ENCODE measurements at regions of chr10 and their contacts with region 1.

Region 1: DNA sequence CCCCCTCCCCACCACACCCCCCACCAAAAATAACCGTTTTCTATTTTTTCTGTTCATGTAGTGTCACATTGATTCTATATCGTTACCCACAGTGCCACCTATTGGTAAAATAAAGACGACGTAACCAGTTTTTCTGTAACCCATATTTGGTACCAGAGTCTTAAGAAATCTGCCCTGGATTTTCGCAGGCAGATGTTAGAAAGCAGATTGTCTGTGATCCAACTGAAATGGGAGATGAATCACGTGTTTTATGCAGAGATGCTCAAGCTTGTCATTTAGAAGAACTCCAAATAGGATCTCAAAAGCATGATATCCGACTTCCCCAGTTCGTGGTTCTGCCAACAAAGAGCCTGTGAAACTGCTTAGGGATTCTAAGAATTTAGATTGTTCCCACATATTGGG is 261.1 kb upstream of the CSTF2T start:
- DNase-seq: no peak
- ATAC-seq: peak; percentile 71
- H3K4me3 ChIP-seq: no peak overlapping the region
- H3K27ac ChIP-seq: no peak overlapping the region
- H3K4me1 ChIP-seq: no peaks in the 10 kb centered on the region
- H3K27me3 ChIP-seq: no peaks in the 10 kb centered on the region
- CTCF ChIP-seq: peak; percentile 38 to 50 (median 49); a peak in 5 of 6 replicates
- EP300 ChIP-seq: no peak
- POLR2A ChIP-seq: no peak
- RAD21 ChIP-seq: peak; percentile 79

Region 2: GRCh38 chr10:51063659-51064535 is 896.6 kb before region 1 on chr10:
- CTCF ChIA-PET with region 1: interaction called, 4 read pairs
- POLR2A ChIA-PET with region 1: no interaction called
- RAD21 ChIA-PET with region 1: no interaction called
- SMC1A ChIA-PET with region 1: no interaction called
- in situ Hi-C with region 1: loop called (anchors 25 kb)
- intact Hi-C with region 1: loop called (anchors 5 kb)
- DNase-seq: no peak
- ATAC-seq: peak; percentile 50; the same call in 2 of the 3 replicates
- H3K4me3 ChIP-seq: no peak overlapping the region
- H3K27ac ChIP-seq: no peak overlapping the region
- H3K4me1 ChIP-seq: no peaks in the 10 kb centered on the region
- H3K27me3 ChIP-seq: no peaks in the 10 kb centered on the region
- CTCF ChIP-seq: peak; percentile 25 to 56 (median 37); a peak in 3 of 6 replicates
- EP300 ChIP-seq: no peak
- POLR2A ChIP-seq: no peak
- RAD21 ChIP-seq: peak; percentile 40; the same call in 1 of the 2 replicates

Region 3: GRCh38 chr10:51074238-51075028 is 886.1 kb before region 1 on chr10 and contains the start of gene PRKG1:
- CTCF ChIA-PET with region 1: no interaction called
- POLR2A ChIA-PET with region 1: no interaction called
- RAD21 ChIA-PET with region 1: no interaction called
- SMC1A ChIA-PET with region 1: no interaction called
- in situ Hi-C with region 1: loop called (anchors 25 kb)
- intact Hi-C with region 1: no loop called
- DNase-seq: no peak
- ATAC-seq: no peak
- H3K4me3 ChIP-seq: no peak within 1 kb of the TSS
- H3K27ac ChIP-seq: no peak within 1 kb of the TSS
- H3K4me1 ChIP-seq: no peaks in the 10 kb centered on the region
- H3K27me3 ChIP-seq: peaks cover 3 to 14% of the 10 kb centered on the region in 2 experiments
- CTCF ChIP-seq: no peak
- EP300 ChIP-seq: no peak
- POLR2A ChIP-seq: no peak
- RAD21 ChIP-seq: no peak
- polyA plus RNA-seq, gene PRKG1: not detected

Region 4: DNA sequence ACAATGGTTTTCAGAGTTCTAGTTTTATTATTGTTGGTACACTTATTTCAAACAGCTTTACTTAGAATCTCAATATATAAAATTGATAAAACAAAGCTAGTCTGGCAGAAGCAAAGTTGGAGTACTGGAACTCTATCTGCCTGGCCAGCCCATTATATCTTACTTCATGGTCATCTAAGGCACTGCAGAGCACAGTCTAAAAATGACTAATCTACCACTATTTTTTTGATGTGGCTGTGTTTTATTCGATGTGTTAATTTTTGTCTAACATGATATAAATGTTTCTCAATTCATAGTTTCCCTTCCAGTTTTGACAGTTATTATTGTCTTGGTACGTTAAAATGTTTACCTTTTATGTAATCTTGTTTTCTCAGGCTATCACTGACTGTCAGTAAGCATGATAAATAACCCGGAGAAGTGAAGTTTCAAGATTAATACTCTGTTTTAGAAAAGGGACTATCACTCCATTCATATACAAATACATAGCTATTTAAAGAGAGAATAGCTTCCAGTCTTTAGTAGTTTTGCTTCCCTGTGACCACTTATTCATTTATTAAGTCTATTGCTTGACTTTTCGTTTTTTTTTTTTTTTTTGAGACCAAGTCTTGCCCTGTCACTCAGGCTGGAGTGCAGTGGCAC is 200.5 kb before region 1 on chr10:
- CTCF ChIA-PET with region 1: no interaction called
- POLR2A ChIA-PET with region 1: no interaction called
- RAD21 ChIA-PET with region 1: no interaction called
- SMC1A ChIA-PET with region 1: no interaction called
- in situ Hi-C with region 1: no loop called
- intact Hi-C with region 1: no loop called
- DNase-seq: no peak
- ATAC-seq: peak; percentile 74
- H3K4me3 ChIP-seq: no peak overlapping the region
- H3K27ac ChIP-seq: no peak overlapping the region
- H3K4me1 ChIP-seq: no peaks in the 10 kb centered on the region
- H3K27me3 ChIP-seq: no peaks in the 10 kb centered on the region
- CTCF ChIP-seq: no peak
- EP300 ChIP-seq: no peak
- POLR2A ChIP-seq: no peak
- RAD21 ChIP-seq: no peak

Measured in GM12878 (cell line).